ENCODE measurements at regions of chr13 and their contacts with region 1.

Region 1: GRCh38 chr13:29892151-29892550 is 41.7 kb upstream of the UBL3 start:
- DNase-seq: no peak
- ATAC-seq: no peak
- H3K4me3 ChIP-seq: no peak overlapping the region
- H3K4me3 Mint-ChIP-seq: no peak overlapping the region
- H3K27ac ChIP-seq: no peak overlapping the region
- H3K27ac Mint-ChIP-seq: no peak overlapping the region
- H3K4me1 ChIP-seq: peaks cover 4% of the 10 kb centered on the region
- H3K4me1 Mint-ChIP-seq: peaks cover 5% of the 10 kb centered on the region
- H3K27me3 ChIP-seq: no peaks in the 10 kb centered on the region
- H3K27me3 Mint-ChIP-seq: no peaks in the 10 kb centered on the region
- CTCF ChIP-seq: no peak

Region 2: DNA sequence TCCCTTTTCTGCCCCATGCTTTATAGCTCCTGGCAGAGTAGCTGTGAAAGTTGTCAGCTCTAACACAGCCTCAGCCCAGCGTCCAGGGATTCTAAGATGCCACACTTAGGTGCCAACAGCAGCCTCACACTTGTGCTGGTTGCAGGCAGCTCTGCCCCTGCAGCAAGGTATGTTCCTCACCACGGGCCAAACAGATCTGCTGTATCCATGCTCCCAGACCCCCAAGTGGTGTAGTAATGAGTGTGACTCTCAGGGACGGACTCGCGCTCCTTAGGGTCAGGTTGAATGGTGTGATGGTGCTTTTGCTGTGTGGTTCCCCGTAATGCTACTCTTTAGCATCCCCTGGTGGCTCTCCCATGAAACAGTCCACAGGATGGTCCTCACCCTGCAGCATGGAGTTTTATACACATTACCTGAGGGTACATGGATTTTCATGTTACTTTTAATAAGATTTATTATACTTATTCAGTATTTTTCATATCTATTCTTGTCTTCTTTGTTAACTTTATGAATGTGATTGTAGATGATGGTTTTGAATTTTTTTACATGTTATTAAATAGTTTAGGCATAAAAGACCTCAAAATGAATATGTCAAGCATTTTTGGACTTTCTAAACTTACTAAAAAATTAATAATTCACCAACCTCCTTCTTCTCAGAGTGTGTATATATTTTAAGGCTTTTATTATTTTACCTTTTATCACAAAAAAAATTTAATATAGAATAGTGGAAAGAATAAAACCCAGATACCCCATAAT is 529.1 kb before region 1 on chr13:
- CTCF ChIA-PET with region 1: no interaction called
- POLR2A ChIA-PET with region 1: no interaction called
- intact Hi-C with region 1: no loop called
- DNase-seq: peak in 10 of 14 experiments; percentile 4 to 64 (median 14)
- ATAC-seq: peak; percentile 79
- H3K4me3 ChIP-seq: no peak overlapping the region
- H3K4me3 Mint-ChIP-seq: no peak overlapping the region
- H3K27ac ChIP-seq: no peak overlapping the region
- H3K27ac Mint-ChIP-seq: no peak overlapping the region
- H3K4me1 ChIP-seq: peaks cover 5% of the 10 kb centered on the region
- H3K4me1 Mint-ChIP-seq: no peaks in the 10 kb centered on the region
- H3K27me3 ChIP-seq: no peaks in the 10 kb centered on the region
- H3K27me3 Mint-ChIP-seq: peaks cover 22% of the 10 kb centered on the region
- CTCF ChIP-seq: peak; percentile 71

Region 3: DNA sequence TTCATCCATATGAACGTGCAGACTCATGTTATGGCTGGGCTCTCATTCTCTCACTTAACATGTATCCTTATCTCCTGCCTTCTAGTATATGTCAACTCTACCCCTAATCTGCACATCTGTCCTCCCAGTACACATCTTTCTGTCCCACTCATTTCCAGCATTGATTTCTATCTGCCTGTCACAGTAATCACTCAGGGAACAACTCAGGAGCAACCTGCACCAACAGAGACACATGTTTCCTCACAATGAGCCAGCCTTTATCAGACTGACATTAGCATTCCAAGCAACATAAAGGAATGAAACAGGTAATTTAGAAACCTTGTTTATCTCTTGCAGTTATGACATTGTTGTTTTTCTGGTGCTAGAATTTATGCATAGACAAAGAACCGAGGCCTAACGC is 279.1 kb before region 1 on chr13:
- CTCF ChIA-PET with region 1: no interaction called
- POLR2A ChIA-PET with region 1: no interaction called
- intact Hi-C with region 1: no loop called
- DNase-seq: no peak
- ATAC-seq: no peak
- H3K4me3 ChIP-seq: no peak overlapping the region
- H3K4me3 Mint-ChIP-seq: no peak overlapping the region
- H3K27ac ChIP-seq: no peak overlapping the region
- H3K27ac Mint-ChIP-seq: no peak overlapping the region
- H3K4me1 ChIP-seq: no peaks in the 10 kb centered on the region
- H3K4me1 Mint-ChIP-seq: no peaks in the 10 kb centered on the region
- H3K27me3 ChIP-seq: peaks cover 6 to 23% of the 10 kb centered on the region in 2 experiments
- H3K27me3 Mint-ChIP-seq: peaks cover 69% of the 10 kb centered on the region
- CTCF ChIP-seq: no peak

Region 4: GRCh38 chr13:29859971-29860370 is 32.2 kb before region 1 on chr13:
- CTCF ChIA-PET with region 1: no interaction called
- POLR2A ChIA-PET with region 1: no interaction called
- intact Hi-C with region 1: no loop called
- DNase-seq: peak in 2 of 14 experiments; percentile 19 to 31
- ATAC-seq: no peak
- H3K4me3 ChIP-seq: no peak overlapping the region
- H3K4me3 Mint-ChIP-seq: no peak overlapping the region
- H3K27ac ChIP-seq: no peak overlapping the region
- H3K27ac Mint-ChIP-seq: no peak overlapping the region
- H3K4me1 ChIP-seq: no peaks in the 10 kb centered on the region
- H3K4me1 Mint-ChIP-seq: no peaks in the 10 kb centered on the region
- H3K27me3 ChIP-seq: no peaks in the 10 kb centered on the region
- H3K27me3 Mint-ChIP-seq: peaks cover 5% of the 10 kb centered on the region
- CTCF ChIP-seq: no peak

Region 5: DNA sequence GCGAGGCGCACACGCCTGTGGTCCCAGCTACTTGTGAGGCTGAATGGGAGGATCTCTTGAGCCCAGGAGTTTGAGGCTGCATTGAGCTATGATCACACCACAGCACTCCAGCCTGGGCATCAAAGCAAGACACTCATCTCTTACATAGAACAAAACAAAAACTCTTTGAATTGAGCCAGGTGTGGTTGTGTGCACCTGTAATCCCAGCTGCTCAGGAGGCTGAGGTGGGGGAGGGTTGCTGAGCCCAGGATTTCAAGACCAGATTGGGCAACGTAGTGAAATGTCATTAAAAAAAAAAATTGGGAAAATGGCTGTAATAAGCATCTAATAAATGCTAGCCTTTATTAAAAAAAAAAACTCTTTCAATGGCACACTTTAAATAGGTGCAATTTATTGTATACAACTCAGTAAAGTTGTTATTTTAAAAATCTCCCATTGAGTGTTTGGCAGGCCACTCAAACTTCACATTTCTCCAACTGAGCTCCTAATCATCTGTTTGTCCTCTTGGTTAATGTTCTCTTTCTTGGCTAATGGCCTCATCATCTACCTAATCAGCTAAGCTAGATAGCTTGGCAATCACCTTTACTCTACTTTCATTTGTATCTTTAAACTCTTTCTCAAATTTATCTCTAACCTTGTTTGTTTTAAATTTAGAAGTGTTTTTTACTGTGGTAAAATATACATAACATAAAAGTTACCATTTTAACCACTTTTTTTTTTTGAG is 601.7 kb after region 1 on chr13:
- CTCF ChIA-PET with region 1: no interaction called
- POLR2A ChIA-PET with region 1: no interaction called
- intact Hi-C with region 1: no loop called
- DNase-seq: no peak
- ATAC-seq: no peak
- H3K4me3 ChIP-seq: no peak overlapping the region
- H3K4me3 Mint-ChIP-seq: no peak overlapping the region
- H3K27ac ChIP-seq: no peak overlapping the region
- H3K27ac Mint-ChIP-seq: no peak overlapping the region
- H3K4me1 ChIP-seq: no peaks in the 10 kb centered on the region
- H3K4me1 Mint-ChIP-seq: no peaks in the 10 kb centered on the region
- H3K27me3 ChIP-seq: no peaks in the 10 kb centered on the region
- H3K27me3 Mint-ChIP-seq: no peaks in the 10 kb centered on the region
- CTCF ChIP-seq: no peak

Region 6: DNA sequence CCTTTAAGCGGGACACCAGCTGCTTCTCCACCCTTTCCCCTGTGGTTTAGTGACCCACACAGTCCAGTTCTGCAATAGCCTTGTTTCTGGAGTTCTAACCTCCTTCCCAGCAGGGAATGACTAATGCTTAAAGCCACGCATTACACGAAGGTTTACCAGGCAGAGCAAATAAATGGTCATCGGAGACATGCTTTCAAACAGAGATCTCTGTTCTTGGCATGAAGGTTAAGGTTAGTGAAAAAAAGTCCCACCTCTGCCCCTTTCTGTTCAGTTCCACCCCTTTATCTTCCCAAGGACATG is 988.7 kb after region 1 on chr13:
- CTCF ChIA-PET with region 1: no interaction called
- POLR2A ChIA-PET with region 1: no interaction called
- intact Hi-C with region 1: loop called in 1 of 2 experiments (anchors 5 kb)
- DNase-seq: no peak
- ATAC-seq: no peak
- H3K4me3 ChIP-seq: no peak overlapping the region
- H3K4me3 Mint-ChIP-seq: no peak overlapping the region
- H3K27ac ChIP-seq: no peak overlapping the region
- H3K27ac Mint-ChIP-seq: no peak overlapping the region
- H3K4me1 ChIP-seq: no peaks in the 10 kb centered on the region
- H3K4me1 Mint-ChIP-seq: no peaks in the 10 kb centered on the region
- H3K27me3 ChIP-seq: peaks cover 3% of the 10 kb centered on the region in 2 experiments
- H3K27me3 Mint-ChIP-seq: peaks cover 32% of the 10 kb centered on the region
- CTCF ChIP-seq: no peak

Measured in CD4-positive, alpha-beta T cell (primary cell).